Thyroid gland (tissue), 4 donors: ENCODE measurements at regions of chr1 and their contacts with region 1.

Region 1: DNA sequence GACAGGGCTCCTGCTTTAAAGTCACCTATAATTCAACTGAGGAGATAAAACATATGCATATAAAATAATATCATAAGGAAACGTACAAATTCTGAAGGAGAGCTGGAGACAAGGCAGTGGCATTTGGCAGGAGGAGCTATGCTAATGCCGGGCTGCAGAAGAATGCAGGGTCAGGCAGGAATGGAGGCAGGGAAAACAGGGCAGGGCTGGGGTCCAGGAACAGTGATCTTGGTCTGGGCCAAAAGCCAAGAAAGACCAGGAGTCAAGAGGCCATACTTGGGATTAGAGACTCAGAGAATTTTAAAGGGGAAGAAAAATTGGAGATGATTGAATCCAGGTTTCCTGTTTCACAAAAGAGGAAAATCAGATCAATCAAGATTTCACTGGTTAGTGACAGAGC is 20.0 kb upstream of the BRDT start:
- DNase-seq: peak; percentile 77 to 80
- H3K4me3 ChIP-seq: no peak overlapping the region
- H3K27ac ChIP-seq: peak overlapping the region; percentile 36 to 64 (median 36)
- H3K4me1 ChIP-seq: peaks cover 0 to 9% of the 10 kb centered on the region in 2 donors
- H3K27me3 ChIP-seq: no peaks in the 10 kb centered on the region
- CTCF ChIP-seq: no peak
- POLR2A ChIP-seq: no peak

Region 2: GRCh38 chr1:91511386-91511785 is 417.9 kb before region 1 on chr1:
- intact Hi-C with region 1: loop called (anchors 5 kb)
- DNase-seq: no peak
- H3K4me3 ChIP-seq: no peak overlapping the region
- H3K27ac ChIP-seq: no peak overlapping the region
- H3K4me1 ChIP-seq: no peaks in the 10 kb centered on the region
- H3K27me3 ChIP-seq: no peaks in the 10 kb centered on the region
- CTCF ChIP-seq: peak in 5 of 6 experiments; percentile 37 to 71 (median 67)
- POLR2A ChIP-seq: no peak